Breast epithelium (tissue), 4 donors: ENCODE measurements at regions of chr10 and their contacts with region 1.

Region 1: GRCh38 chr10:30510169-30510930 is 76.4 kb downstream of the MAP3K8 start:
- DNase-seq: no peak
- H3K4me3 ChIP-seq: no peak overlapping the region
- H3K27ac ChIP-seq: no peak overlapping the region
- H3K4me1 ChIP-seq: no peaks in the 10 kb centered on the region
- H3K27me3 ChIP-seq: no peaks in the 10 kb centered on the region
- CTCF ChIP-seq: no peak
- POLR2A ChIP-seq: no peak

Region 2: DNA sequence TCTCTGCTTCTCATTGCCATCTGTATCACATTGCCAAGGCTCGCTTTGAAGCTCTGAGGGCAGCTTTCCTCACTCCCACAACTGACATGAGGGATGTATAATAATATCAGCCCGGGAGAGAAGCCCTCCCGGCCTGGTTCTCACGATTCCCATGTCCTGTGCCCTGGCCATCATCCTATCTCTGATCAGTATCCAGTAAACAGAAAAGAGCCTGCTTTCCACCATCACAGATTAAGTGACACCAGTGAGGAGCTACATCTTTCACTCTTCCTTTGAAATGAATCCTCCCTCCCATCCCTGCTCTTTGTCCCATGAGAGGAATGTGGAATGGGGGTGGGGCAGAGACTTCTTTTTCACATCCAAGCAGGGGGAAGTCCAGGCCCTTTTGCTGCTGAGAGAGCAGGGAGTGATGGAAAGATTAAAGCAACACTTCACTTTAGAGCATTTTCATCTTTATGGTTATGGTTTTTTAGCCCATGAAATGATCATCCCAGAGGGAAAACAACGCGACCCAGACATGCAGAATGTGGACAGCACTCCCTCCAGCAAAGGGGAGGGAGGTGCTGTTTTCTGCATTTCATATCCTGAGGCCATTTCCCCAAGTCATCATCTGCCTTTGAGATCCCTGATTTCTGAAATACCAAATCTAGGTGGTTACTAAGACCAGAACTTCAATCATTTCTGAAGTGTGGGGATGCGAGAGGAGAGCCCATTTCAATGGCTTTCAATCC is 1306.1 kb before region 1 on chr10:
- intact Hi-C with region 1: loop called (anchors 10 kb)
- DNase-seq: no peak
- H3K4me3 ChIP-seq: no peak overlapping the region
- H3K27ac ChIP-seq: no peak overlapping the region
- H3K4me1 ChIP-seq: no peaks in the 10 kb centered on the region
- H3K27me3 ChIP-seq: no peaks in the 10 kb centered on the region
- CTCF ChIP-seq: no peak
- POLR2A ChIP-seq: no peak